Head of caudate nucleus (tissue), 42 donors: ENCODE measurements at regions of chr9 and their contacts with region 1.

Region 1: DNA sequence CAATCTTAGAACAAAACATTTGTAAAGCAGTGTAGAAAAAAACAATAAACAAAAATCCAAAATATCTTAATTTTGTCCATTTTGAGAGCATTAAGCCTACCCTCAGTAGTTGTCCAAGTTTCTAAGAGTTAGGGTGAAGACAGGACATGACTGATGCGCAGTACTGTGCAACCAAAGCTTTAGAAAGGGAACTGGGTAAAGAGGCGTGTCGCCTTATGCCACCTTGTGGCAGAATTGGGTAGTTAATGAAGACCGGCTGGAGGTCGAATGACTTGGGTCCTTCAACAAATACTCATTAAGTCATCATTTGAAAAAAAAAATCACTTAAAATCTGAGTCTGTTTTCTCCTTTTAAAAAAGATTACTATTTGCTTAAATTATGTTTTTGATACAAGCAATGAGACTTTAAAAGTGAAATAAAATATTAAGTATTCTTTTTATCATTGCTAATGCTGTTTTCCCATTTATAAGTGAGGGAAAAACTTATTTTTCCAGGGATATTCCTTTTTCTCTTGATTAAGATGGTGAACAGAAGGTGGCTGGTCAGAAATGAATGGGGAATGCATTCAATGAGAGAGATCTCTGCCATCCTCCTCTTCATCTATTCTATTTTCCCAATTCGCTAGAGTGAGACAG is 3.5 kb upstream of the RNF20 start:
- DNase-seq: peak; percentile 53 to 93 (median 81)

Region 2: GRCh38 chr9:101458955-101459631 is 71.1 kb before region 1 on chr9:
- intact Hi-C with region 1: loop called (anchors 2 kb)
- DNase-seq: peak in 26 of 42 donors; percentile 11 to 83 (median 48)